Adrenal gland (tissue), 19 donors: ENCODE measurements at regions of chr20 and their contacts with region 1.

Region 1: GRCh38 chr20:52083627-52084232 is 107.8 kb downstream of the ZFP64 start:
- DNase-seq: peak; percentile 38 to 80 (median 55)
- H3K4me3 ChIP-seq: no peak overlapping the region
- H3K27ac ChIP-seq: no peak overlapping the region
- H3K4me1 ChIP-seq: no peaks in the 10 kb centered on the region
- H3K27me3 ChIP-seq: no peaks in the 10 kb centered on the region
- CTCF ChIP-seq: peak; percentile 36 to 61 (median 52)
- POLR2A ChIP-seq: no peak

Region 2: GRCh38 chr20:51643390-51643789 is 440.3 kb before region 1 on chr20:
- intact Hi-C with region 1: loop called in 1 of 2 experiments (anchors 5 kb)
- DNase-seq: no peak
- H3K4me3 ChIP-seq: no peak overlapping the region
- H3K27ac ChIP-seq: no peak overlapping the region
- H3K4me1 ChIP-seq: no peaks in the 10 kb centered on the region
- H3K27me3 ChIP-seq: no peaks in the 10 kb centered on the region
- CTCF ChIP-seq: no peak
- POLR2A ChIP-seq: no peak

Region 3: DNA sequence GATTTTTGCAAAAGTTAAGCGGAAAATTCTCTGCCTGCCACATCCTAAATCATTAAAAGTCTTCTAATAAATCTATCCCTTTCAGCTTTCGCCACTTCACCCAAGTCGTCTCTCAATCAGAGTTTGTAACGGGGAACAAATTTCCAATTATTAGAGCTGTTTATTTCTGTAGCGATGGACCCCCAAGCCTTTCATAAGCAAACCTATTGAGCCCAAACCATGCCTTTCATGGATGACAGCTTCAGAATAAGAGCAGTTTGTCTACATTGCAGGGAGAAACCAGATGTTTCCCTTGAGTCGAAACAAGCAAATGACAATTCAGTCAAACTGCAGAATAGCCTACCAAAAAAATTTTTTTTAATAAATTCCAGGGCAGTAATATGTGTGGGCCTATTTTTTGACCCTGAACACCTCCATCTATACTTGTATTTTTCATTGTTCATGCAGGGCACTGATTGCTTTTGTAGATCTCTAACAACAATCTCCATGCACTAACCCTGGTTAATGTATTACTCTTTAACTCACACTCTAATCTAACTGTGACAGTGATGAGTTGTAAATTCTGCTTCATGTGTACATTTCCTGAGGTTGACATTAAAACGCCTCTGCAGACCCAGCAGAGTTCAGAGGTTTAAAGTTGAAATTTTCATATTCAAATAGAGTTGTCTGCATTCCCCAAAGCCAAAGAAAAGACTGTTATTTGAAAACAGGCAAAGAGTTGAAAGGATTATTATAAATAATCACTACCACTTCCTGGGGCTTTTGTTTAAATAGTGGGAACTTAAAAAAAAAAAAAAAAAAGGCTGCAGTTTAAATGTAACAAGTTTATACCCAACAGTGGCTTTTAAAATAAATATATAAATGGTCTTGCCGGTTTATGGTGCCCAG is 380.1 kb before region 1 on chr20:
- intact Hi-C with region 1: loop called (anchors 5 to 10 kb)
- DNase-seq: no peak
- H3K4me3 ChIP-seq: no peak overlapping the region
- H3K27ac ChIP-seq: no peak overlapping the region
- H3K4me1 ChIP-seq: no peaks in the 10 kb centered on the region
- H3K27me3 ChIP-seq: no peaks in the 10 kb centered on the region
- CTCF ChIP-seq: no peak
- POLR2A ChIP-seq: no peak

Region 4: GRCh38 chr20:51800060-51800794 is 283.5 kb before region 1 on chr20:
- intact Hi-C with region 1: loop called in 1 of 2 experiments (anchors 10 kb)
- DNase-seq: peak in 6 of 7 donors; percentile 25 to 69 (median 54)
- H3K4me3 ChIP-seq: peak overlapping the region in 1 of 4 donors; percentile 55
- H3K27ac ChIP-seq: no peak overlapping the region
- H3K4me1 ChIP-seq: peaks cover 11 to 16% of the 10 kb centered on the region in 2 donors
- H3K27me3 ChIP-seq: peaks cover 35% of the 10 kb centered on the region
- CTCF ChIP-seq: peak; percentile 36 to 62 (median 58)
- POLR2A ChIP-seq: no peak

Region 5: DNA sequence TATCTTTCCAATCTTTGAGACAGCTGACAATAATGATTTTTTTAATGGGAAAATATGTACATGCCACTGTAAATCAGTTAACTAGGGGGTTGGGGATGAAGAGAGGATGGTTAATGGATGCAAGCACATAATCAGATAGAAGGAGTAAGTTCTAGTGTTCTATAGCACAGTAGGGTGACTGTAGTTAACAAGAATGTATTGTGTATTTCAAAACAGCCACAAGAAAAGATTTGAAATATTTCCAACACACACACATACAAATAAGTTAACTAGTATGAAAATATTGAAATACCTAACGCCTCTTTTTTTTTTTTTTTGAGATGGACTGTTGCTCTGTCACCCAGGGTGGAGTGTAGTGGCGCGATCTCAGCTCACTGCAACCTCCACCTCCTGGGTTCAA is 128.0 kb before region 1 on chr20:
- intact Hi-C with region 1: no loop called
- DNase-seq: no peak
- H3K4me3 ChIP-seq: no peak overlapping the region
- H3K27ac ChIP-seq: no peak overlapping the region
- H3K4me1 ChIP-seq: no peaks in the 10 kb centered on the region
- H3K27me3 ChIP-seq: no peaks in the 10 kb centered on the region
- CTCF ChIP-seq: no peak
- POLR2A ChIP-seq: no peak